ENCODE measurements at regions of chr17 and their contacts with region 1.

Region 1: GRCh38 chr17:76331083-76331482 is 22.6 kb downstream of the PRPSAP1 start:
- DNase-seq: no peak
- ATAC-seq: no peak
- H3K4me3 ChIP-seq: no peak overlapping the region
- H3K27ac ChIP-seq: no peak overlapping the region
- H3K4me1 ChIP-seq: no peaks in the 10 kb centered on the region
- CTCF ChIP-seq: no peak
- EP300 ChIP-seq: no peak
- POLR2A ChIP-seq: no peak
- RAD21 ChIP-seq: no peak

Region 2: GRCh38 chr17:76219670-76220383 is 111.3 kb before region 1 on chr17:
- CTCF ChIA-PET with region 1: no interaction called
- POLR2A ChIA-PET with region 1: no interaction called
- DNase-seq: no peak
- ATAC-seq: no peak
- H3K4me3 ChIP-seq: no peak overlapping the region
- H3K27ac ChIP-seq: no peak overlapping the region
- H3K4me1 ChIP-seq: peaks cover 8% of the 10 kb centered on the region; the same call in 2 of the 3 replicates
- CTCF ChIP-seq: no peak
- EP300 ChIP-seq: no peak
- POLR2A ChIP-seq: no peak
- RAD21 ChIP-seq: no peak

Region 3: GRCh38 chr17:76314392-76315227 is 16.5 kb before region 1 on chr17:
- CTCF ChIA-PET with region 1: interaction called, 12 read pairs
- POLR2A ChIA-PET with region 1: no interaction called
- DNase-seq: no peak
- ATAC-seq: no peak
- H3K4me3 ChIP-seq: no peak overlapping the region
- H3K27ac ChIP-seq: no peak overlapping the region
- H3K4me1 ChIP-seq: no peaks in the 10 kb centered on the region
- CTCF ChIP-seq: no peak
- EP300 ChIP-seq: no peak
- POLR2A ChIP-seq: no peak
- RAD21 ChIP-seq: no peak

Region 4: GRCh38 chr17:76452127-76452659 is 121.1 kb after region 1 on chr17:
- CTCF ChIA-PET with region 1: no interaction called
- POLR2A ChIA-PET with region 1: no interaction called
- DNase-seq: no peak
- ATAC-seq: peak; percentile 70 to 73
- H3K4me3 ChIP-seq: peak overlapping the region; percentile 84
- H3K27ac ChIP-seq: peak overlapping the region; percentile 85 to 94
- H3K4me1 ChIP-seq: peaks cover 35% of the 10 kb centered on the region
- CTCF ChIP-seq: no peak
- EP300 ChIP-seq: no peak
- POLR2A ChIP-seq: no peak
- RAD21 ChIP-seq: no peak

Region 5: GRCh38 chr17:76473541-76473985 is 142.5 kb after region 1 on chr17:
- CTCF ChIA-PET with region 1: no interaction called
- POLR2A ChIA-PET with region 1: no interaction called
- DNase-seq: peak in 1 of 2 experiments; percentile 49
- ATAC-seq: peak; percentile 48 to 79; a peak in 4 of 6 replicates
- H3K4me3 ChIP-seq: no peak overlapping the region
- H3K27ac ChIP-seq: no peak overlapping the region
- H3K4me1 ChIP-seq: no peaks in the 10 kb centered on the region
- CTCF ChIP-seq: peak; percentile 28; the same call in 2 of the 3 replicates
- EP300 ChIP-seq: no peak
- POLR2A ChIP-seq: no peak
- RAD21 ChIP-seq: no peak

Measured in A549 (cell line).